ENCODE measurements at regions of chr17 and their contacts with region 1.

Region 1: GRCh38 chr17:75205037-75205792 is at the start of gene NUP85:
- DNase-seq: peak; percentile 90
- ATAC-seq: peak; percentile 91
- H3K4me3 Mint-ChIP-seq: peak within 1 kb of the TSS; percentile 96
- H3K27ac Mint-ChIP-seq: peak within 1 kb of the TSS; percentile 99
- H3K4me1 Mint-ChIP-seq: peaks cover 22% of the 10 kb centered on the region
- H3K27me3 Mint-ChIP-seq: no peaks in the 10 kb centered on the region
- CTCF ChIP-seq: no peak
- total RNA-seq, gene NUP85: 103 and 107 TPM in 2 replicates

Region 2: GRCh38 chr17:74748529-74749365 is 456.5 kb before region 1 on chr17 and contains the start of gene NHERF1:
- CTCF ChIA-PET with region 1: no interaction called
- POLR2A ChIA-PET with region 1: no interaction called
- intact Hi-C with region 1: no loop called
- DNase-seq: peak; percentile 97
- ATAC-seq: peak; percentile 96
- H3K4me3 Mint-ChIP-seq: peak within 1 kb of the TSS; percentile 89
- H3K27ac Mint-ChIP-seq: peak within 1 kb of the TSS; percentile 72
- H3K4me1 Mint-ChIP-seq: peaks cover 64% of the 10 kb centered on the region
- H3K27me3 Mint-ChIP-seq: no peaks in the 10 kb centered on the region
- CTCF ChIP-seq: no peak
- total RNA-seq, gene NHERF1: 33.3 and 34.5 TPM in 2 replicates

Region 3: DNA sequence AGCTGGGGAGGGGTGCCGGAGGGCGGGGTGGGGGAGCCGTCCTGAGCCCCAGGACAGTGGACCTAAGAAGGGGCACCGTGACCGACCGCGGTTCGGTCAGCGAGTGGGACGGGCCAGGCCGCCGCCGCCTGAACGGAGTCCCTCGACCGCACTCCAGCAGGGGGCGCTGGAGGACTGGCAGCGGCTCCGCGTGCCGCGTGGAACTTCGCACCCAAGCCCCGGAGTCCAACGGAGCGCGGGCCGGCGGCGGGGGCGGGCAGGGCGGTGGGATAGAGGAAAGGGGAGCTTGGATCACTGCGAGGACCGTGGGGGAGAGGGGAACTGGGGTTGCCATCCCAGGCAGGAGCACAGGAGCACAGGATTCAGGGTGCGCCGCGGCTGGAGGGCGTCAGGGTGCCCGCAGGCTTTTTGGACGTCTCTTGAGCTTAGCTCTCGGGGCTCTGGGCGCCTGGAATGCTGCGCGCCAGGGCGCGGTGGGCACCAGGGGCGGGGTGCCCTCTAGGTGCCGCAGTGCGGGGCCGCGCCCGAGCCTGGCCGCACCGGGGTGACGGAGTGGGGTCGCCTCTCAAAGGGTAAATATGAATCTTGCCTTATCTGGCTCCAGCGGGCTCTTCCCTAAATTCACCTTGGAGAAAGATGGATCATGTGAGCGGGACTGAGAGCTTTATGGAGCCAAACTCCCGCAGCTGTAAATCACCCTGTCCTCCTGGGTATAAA is 281.5 kb before region 1 on chr17:
- CTCF ChIA-PET with region 1: no interaction called
- POLR2A ChIA-PET with region 1: no interaction called
- intact Hi-C with region 1: loop called (anchors 5 kb)
- DNase-seq: peak; percentile 68
- ATAC-seq: peak; percentile 67
- H3K4me3 Mint-ChIP-seq: peak overlapping the region; percentile 63
- H3K27ac Mint-ChIP-seq: no peak overlapping the region
- H3K4me1 Mint-ChIP-seq: peaks cover 21% of the 10 kb centered on the region
- H3K27me3 Mint-ChIP-seq: peaks cover 57% of the 10 kb centered on the region
- CTCF ChIP-seq: no peak

Region 4: DNA sequence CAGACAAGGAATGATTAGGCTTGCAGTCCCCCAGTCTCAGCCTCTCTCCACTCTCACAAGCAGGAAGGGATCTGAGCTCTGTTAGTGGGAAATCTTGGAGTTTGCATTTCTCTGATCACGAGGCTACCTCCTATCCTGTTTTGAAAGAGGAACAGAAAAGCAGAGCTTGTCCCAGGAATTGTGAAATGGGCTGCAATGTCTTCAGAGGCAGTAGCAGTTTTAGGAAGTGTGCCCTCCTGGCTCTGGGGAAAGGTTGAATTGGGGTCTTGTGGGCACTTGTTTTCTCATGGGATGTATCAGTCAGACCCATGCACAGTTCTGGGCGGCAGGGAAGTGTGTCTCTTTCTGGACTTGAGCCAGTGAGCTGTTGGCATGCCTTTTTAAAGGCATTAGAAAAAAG is 23.1 kb after region 1 on chr17:
- CTCF ChIA-PET with region 1: no interaction called
- POLR2A ChIA-PET with region 1: no interaction called
- intact Hi-C with region 1: no loop called
- DNase-seq: no peak
- ATAC-seq: no peak
- H3K4me3 Mint-ChIP-seq: no peak overlapping the region
- H3K27ac Mint-ChIP-seq: no peak overlapping the region
- H3K4me1 Mint-ChIP-seq: no peaks in the 10 kb centered on the region
- H3K27me3 Mint-ChIP-seq: no peaks in the 10 kb centered on the region
- CTCF ChIP-seq: no peak

Region 5: DNA sequence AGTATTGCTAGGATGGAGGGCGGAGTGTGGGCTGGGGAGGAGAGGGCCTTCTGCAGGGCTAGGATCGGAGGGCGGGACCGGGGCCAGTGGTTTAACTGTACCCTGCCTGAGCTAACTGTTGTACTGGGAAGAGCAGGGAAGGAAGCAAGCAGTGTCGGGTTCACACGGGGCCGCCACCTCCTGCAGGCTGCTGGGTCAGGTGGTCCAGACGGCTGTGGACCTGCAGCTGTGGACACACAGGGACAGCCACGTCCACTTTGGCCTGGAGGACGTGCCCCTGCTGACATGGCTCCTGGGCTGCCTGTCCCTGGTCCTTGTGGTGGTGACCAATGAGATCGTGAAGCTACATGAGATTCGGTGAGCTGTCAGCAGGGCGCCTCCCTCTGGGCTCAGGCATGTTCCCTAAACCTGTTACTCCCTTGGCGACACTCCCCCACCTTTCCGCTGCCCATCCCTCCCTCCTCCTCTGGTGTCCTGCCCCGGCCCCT is 293.6 kb after region 1 on chr17:
- CTCF ChIA-PET with region 1: no interaction called
- POLR2A ChIA-PET with region 1: no interaction called
- intact Hi-C with region 1: no loop called
- DNase-seq: no peak
- ATAC-seq: no peak
- H3K4me3 Mint-ChIP-seq: no peak overlapping the region
- H3K27ac Mint-ChIP-seq: no peak overlapping the region
- H3K4me1 Mint-ChIP-seq: no peaks in the 10 kb centered on the region
- H3K27me3 Mint-ChIP-seq: no peaks in the 10 kb centered on the region
- CTCF ChIP-seq: no peak

Measured in activated B cell treated with CpG ODN at 0.5 μM for 24 hours (primary cell).